CD8-positive, alpha-beta T cell (primary cell): ENCODE measurements at regions of chr11 and their contacts with region 1.

Region 1: DNA sequence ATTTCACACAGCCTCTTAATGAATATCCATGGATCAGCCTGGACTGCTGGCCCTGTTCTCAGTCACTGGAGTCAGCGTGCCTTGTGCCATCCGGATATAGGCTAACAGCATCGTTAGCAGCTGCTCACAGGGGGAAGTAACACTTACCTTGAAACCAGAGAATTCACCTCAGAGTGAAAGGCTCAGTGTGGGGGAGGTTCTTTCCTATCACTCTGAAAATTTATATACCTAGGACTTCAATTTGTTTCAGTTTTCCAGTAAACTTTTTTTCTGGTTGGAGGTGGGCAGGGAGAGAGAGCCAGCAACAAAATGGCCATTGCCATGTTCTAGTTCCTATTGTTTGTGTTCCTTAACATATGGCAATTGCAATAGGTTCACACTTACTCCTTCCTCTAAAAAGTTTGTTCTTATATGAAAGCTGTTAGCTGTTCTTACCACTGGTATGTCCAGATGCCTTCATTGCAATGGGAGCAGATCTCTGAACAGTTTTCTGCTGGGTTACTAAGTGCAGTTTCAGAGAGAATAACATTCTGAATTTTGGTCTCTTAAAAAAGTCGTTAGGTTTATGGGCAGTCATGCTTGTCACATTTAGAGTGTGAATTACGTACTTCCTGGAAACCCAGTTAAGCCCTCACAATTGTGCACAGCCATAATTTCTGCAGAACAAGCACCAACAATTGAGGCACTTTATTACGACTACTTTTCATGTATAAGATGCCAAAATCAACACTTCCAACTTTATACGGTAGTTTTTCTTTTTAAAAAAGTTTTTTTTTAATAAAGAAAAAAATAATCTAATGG is 247.6 kb downstream of the CADM1 start:
- DNase-seq: peak in 5 of 9 experiments; percentile 8 to 80 (median 25)
- ATAC-seq: peak; percentile 77
- H3K4me3 ChIP-seq: peak overlapping the region in 1 of 2 experiments; percentile 9
- H3K4me3 Mint-ChIP-seq: peak overlapping the region; percentile 12
- H3K27ac ChIP-seq: peak overlapping the region; percentile 61 to 89
- H3K27ac Mint-ChIP-seq: peak overlapping the region; percentile 70
- H3K4me1 ChIP-seq: no peaks in the 10 kb centered on the region
- H3K4me1 Mint-ChIP-seq: peaks cover 13% of the 10 kb centered on the region
- H3K27me3 ChIP-seq: no peaks in the 10 kb centered on the region
- H3K27me3 Mint-ChIP-seq: no peaks in the 10 kb centered on the region
- CTCF ChIP-seq: no peak

Region 2: DNA sequence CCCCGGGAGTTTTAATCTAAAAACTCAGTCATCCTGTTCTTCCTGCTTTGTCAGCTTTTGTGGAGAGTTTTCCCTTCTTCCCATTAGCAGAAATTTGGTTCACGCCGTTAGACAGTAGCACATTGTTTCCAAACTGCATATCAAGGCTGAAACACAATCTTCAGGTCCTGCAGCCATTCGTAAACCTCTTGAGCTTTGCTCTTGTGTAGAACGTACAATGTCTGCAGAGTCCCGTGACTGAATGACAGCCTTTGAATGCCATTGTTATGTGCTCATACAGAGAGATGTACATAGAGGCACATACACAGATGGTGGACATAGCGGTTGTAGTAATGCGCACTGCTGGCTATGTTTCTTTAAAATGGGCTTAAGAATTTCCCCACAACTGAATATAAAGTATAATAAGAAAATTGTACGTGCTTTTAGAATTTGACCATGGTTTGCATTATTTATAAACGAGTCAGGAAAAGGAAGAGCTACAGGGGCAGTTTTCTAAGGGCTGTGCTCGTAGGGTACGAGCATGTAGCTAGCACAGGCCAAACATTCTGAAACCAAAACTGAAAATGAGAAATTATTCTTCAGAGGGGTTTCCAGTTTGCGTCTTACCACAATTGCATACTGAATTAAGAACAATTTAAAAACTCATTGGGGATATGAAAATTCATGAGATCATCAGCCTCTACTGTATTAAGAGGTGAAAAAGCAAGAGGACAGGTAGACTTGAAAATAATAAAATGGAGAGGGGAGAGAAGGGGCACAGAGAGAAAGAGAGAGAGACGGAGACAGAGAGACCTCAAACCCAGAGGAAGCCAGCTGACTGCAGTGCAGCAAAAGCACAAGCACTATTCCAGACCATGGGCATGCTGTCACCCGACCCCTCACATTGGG is 62.4 kb before region 1 on chr11:
- CTCF ChIA-PET with region 1: no interaction called
- POLR2A ChIA-PET with region 1: no interaction called
- intact Hi-C with region 1: loop called in 1 of 2 experiments (anchors 2 kb)
- DNase-seq: peak in 2 of 9 experiments; percentile 22 to 48
- ATAC-seq: no peak
- H3K4me3 ChIP-seq: peak overlapping the region; percentile 8 to 34
- H3K4me3 Mint-ChIP-seq: peak overlapping the region; percentile 76
- H3K27ac ChIP-seq: peak overlapping the region in 1 of 2 experiments; percentile 55
- H3K27ac Mint-ChIP-seq: peak overlapping the region; percentile 42
- H3K4me1 ChIP-seq: no peaks in the 10 kb centered on the region
- H3K4me1 Mint-ChIP-seq: no peaks in the 10 kb centered on the region
- H3K27me3 ChIP-seq: no peaks in the 10 kb centered on the region
- H3K27me3 Mint-ChIP-seq: peaks cover 3% of the 10 kb centered on the region
- CTCF ChIP-seq: no peak